Breast epithelium (tissue), 4 donors: ENCODE measurements at regions of chr5 and their contacts with region 1.

Region 1: DNA sequence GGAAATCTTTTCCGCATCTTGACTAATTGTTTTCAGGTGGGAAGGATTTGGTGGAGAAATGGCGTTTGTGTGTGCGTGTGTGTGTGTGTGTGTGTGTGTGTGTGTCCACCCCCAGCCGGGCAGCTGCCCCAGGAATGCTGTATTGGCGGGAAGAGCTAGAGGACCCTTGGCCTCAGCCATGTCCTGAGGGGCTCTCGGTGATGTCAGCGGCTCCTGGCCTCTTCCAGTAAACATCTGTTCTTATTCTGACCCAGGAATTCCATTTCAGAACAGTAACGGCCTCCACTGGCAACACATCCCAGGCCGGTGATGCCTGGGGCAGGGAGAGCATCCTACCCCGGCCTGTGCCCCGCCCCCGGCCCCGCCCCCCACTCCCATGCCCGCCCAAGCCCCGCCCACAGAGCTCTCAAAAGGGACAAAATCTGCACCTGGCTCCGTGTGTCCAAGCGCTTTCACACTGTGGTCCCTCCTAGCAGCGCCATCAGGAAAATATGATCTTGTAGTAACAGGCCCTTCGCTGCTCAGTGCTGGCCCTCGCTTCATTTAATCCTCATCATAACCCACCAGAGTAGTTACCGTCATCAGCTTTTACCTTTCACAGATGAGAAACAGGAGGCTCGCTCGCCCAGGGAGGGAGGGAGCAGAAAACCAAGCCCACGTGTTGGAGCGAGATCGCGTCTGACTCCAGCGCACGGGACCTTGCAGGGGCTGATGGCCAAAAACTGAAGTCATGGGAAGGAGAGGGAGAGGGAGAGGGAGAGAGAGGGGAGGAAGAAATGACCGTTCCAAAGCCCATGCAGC is 18.9 kb downstream of the ADAMTS2 start:
- DNase-seq: peak in 1 of 2 donors; percentile 85
- H3K4me3 ChIP-seq: peak overlapping the region in 2 of 3 donors; percentile 25 to 26
- H3K27ac ChIP-seq: peak overlapping the region; percentile 87 to 92
- H3K4me1 ChIP-seq: peaks cover 0 to 4% of the 10 kb centered on the region in 2 donors
- H3K27me3 ChIP-seq: no peaks in the 10 kb centered on the region
- CTCF ChIP-seq: no peak
- POLR2A ChIP-seq: no peak

Region 2: DNA sequence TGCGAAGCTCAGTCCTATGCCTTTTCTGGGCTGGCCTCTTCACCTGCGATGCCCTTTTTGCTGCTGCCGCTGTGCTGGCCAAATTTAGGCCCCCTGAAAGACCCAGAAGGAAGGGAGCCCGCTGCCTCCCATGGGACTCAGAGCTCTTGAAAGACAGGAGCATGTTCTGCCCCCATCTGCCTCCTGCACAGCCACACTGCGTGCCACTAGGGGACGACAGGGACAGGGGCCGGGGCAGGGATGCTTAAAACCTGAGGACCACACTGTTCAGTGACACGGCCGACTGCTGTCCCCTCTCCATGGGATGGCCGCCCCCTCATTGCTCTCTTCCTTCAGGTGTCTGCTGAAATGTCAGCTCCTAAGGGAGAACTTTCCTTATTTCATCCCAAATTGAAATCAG is 113.5 kb before region 1 on chr5:
- intact Hi-C with region 1: loop called (anchors 5 kb)
- DNase-seq: no peak
- H3K4me3 ChIP-seq: no peak overlapping the region
- H3K27ac ChIP-seq: no peak overlapping the region
- H3K4me1 ChIP-seq: no peaks in the 10 kb centered on the region
- H3K27me3 ChIP-seq: no peaks in the 10 kb centered on the region
- CTCF ChIP-seq: no peak
- POLR2A ChIP-seq: no peak

Region 3: GRCh38 chr5:179304466-179304865 is 21.9 kb before region 1 on chr5:
- intact Hi-C with region 1: no loop called
- DNase-seq: no peak
- H3K4me3 ChIP-seq: no peak overlapping the region
- H3K27ac ChIP-seq: peak overlapping the region in 1 of 2 donors; percentile 43
- H3K4me1 ChIP-seq: no peaks in the 10 kb centered on the region
- H3K27me3 ChIP-seq: no peaks in the 10 kb centered on the region
- CTCF ChIP-seq: no peak
- POLR2A ChIP-seq: no peak

Region 4: GRCh38 chr5:179393078-179393477 is 66.8 kb after region 1 on chr5:
- intact Hi-C with region 1: no loop called
- DNase-seq: no peak
- H3K4me3 ChIP-seq: no peak overlapping the region
- H3K27ac ChIP-seq: no peak overlapping the region
- H3K4me1 ChIP-seq: no peaks in the 10 kb centered on the region
- H3K27me3 ChIP-seq: no peaks in the 10 kb centered on the region
- CTCF ChIP-seq: no peak
- POLR2A ChIP-seq: no peak

Region 5: DNA sequence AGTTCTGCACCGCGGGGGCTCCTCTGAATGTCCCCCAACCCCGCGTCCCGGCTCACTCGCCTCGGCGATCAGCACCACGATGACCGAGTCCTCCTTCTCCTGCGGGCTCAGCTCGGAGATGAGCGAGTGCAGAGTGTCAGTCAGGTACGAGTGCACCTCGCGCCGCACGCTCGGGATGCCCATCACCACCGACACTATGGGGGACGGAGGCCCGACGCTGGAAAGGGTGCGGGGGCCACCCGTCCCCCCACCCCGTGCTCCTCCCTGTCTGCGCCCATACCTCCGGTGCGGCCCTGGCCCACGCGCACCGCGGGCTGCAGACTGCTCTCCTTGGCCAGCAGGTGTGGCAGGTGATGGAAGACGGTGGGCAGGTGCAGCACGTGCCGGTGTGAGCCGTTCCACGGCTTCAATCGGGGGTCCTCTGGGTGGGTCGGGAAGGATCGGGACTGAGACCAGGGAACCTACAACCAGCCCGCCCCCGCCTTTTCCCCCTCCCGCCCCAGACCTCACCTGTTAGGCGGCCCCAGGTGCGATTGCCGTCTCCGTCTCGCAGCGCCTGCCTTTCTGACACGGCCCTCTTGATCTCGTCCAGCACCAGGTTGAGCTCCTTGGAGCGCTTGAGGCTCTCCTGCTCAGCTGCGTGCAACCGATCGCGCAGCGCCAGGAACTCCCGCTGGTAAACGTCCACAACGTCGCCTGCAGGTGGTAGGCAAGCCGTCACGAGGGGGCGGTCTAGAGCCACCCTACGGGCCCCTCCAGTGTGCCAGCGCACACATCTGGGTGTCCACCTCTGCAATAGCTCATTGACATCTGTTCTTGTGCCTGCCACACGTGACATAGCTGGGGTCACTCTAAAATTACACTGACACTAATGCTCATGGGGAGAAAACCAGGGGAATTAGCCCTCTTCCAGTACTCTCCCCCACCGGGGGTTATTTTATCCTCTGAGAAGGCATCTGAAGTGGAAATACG is 475.2 kb after region 1 on chr5:
- intact Hi-C with region 1: loop called (anchors 5 kb)
- DNase-seq: no peak
- H3K4me3 ChIP-seq: no peak overlapping the region
- H3K27ac ChIP-seq: no peak overlapping the region
- H3K4me1 ChIP-seq: peaks cover 9 to 31% of the 10 kb centered on the region in 2 donors
- H3K27me3 ChIP-seq: no peaks in the 10 kb centered on the region
- CTCF ChIP-seq: peak in 1 of 3 donors; percentile 31
- POLR2A ChIP-seq: no peak